Activated naive CD4-positive, alpha-beta T cell treated with anti-CD3 and anti-CD28 coated beads, Interleukin-2, amount 10 ng/mL, durations not matched to agents 7 days and 5 days (primary cell): ENCODE measurements at regions of chr12 and their contacts with region 1.

Region 1: GRCh38 chr12:107372229-107372658 is 278.9 kb upstream of the CRY1 start:
- DNase-seq: peak; percentile 67
- H3K4me3 Mint-ChIP-seq: peak overlapping the region; percentile 40
- H3K27ac Mint-ChIP-seq: peak overlapping the region; percentile 95
- H3K4me1 Mint-ChIP-seq: peaks cover 87% of the 10 kb centered on the region
- H3K27me3 Mint-ChIP-seq: no peaks in the 10 kb centered on the region

Region 2: DNA sequence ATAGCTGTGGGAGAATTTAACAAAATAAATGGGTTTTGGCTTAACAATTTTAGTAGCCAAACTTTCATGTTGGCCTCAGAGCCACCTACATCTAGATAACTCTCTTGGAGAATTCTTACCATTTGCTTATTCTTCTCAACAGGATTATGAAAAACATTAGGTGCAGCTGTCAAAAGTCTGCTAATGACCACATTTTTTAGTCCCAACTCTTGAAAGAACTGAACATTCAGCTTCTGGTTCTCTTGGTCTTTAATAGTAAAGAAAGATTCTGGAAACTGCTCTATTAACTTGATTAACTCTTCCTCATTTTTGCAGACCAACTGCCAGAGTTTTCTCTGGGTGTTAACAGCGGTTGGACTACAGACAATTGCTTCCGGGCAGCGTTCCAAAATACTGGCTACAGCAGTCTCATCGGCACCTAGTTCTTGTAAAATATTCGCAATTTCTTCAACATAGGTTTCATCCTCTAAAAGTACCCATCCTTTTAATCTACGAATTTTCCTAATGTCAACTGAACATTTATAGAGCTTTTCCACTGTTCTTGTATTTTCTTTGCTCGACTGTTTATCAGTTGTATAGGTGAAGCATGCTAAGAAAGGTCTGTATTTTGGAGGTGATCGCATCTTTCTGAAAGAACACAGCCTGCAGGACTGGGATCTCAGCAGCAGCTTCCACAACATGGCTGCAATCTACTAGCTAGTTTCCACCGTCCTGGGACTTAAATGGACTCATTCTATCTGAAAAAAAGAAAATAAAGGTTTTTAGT is 394.0 kb before region 1 on chr12:
- CTCF ChIA-PET with region 1: no interaction called
- DNase-seq: no peak
- H3K4me3 Mint-ChIP-seq: no peak overlapping the region
- H3K27ac Mint-ChIP-seq: no peak overlapping the region
- H3K4me1 Mint-ChIP-seq: no peaks in the 10 kb centered on the region
- H3K27me3 Mint-ChIP-seq: no peaks in the 10 kb centered on the region

Region 3: GRCh38 chr12:107317751-107318613 is 54.3 kb before region 1 on chr12:
- CTCF ChIA-PET with region 1: interaction called, 34 read pairs
- DNase-seq: peak; percentile 95
- H3K4me3 Mint-ChIP-seq: peak overlapping the region; percentile 88
- H3K27ac Mint-ChIP-seq: peak overlapping the region; percentile 75
- H3K4me1 Mint-ChIP-seq: peaks cover 31% of the 10 kb centered on the region
- H3K27me3 Mint-ChIP-seq: peaks cover 25% of the 10 kb centered on the region